ENCODE measurements at regions of chr14 and their contacts with region 1.

Region 1: GRCh38 chr14:89973234-89973823 is 17.6 kb downstream of the TDP1 start:
- DNase-seq: peak in 2 of 3 donors; percentile 55 to 75
- ATAC-seq: peak; percentile 86
- H3K4me3 ChIP-seq: no peak overlapping the region
- H3K4me1 ChIP-seq: no peaks in the 10 kb centered on the region
- CTCF ChIP-seq: peak; percentile 57

Region 2: GRCh38 chr14:90235179-90235976 is 262.0 kb after region 1 on chr14:
- intact Hi-C with region 1: loop called in 1 of 2 experiments (anchors 10 kb)
- DNase-seq: peak; percentile 55 to 76 (median 71)
- ATAC-seq: peak; percentile 96
- H3K4me3 ChIP-seq: no peak overlapping the region
- H3K4me1 ChIP-seq: no peaks in the 10 kb centered on the region
- CTCF ChIP-seq: peak; percentile 94

Measured in mucosa of descending colon (tissue), 3 donors.